ENCODE measurements at regions of chr11 and their contacts with region 1.

Region 1: GRCh38 chr11:75450826-75451821 is 18.1 kb upstream of the KLHL35 start:
- DNase-seq: no peak
- ATAC-seq: no peak
- H3K4me3 ChIP-seq: no peak overlapping the region
- H3K27ac ChIP-seq: no peak overlapping the region
- H3K4me1 ChIP-seq: peaks cover 7% of the 10 kb centered on the region
- H3K27me3 ChIP-seq: no peaks in the 10 kb centered on the region
- CTCF ChIP-seq: peak; percentile 44
- POLR2A ChIP-seq: no peak
- RAD21 ChIP-seq: peak; percentile 24

Region 2: GRCh38 chr11:75499449-75500190 is 48.5 kb after region 1 on chr11:
- CTCF ChIA-PET with region 1: no interaction called
- POLR2A ChIA-PET with region 1: no interaction called
- dilution Hi-C with region 1: no loop called
- in situ Hi-C with region 1: no loop called
- intact Hi-C with region 1: loop called (anchors 5 kb)
- DNase-seq: peak; percentile 95
- ATAC-seq: peak; percentile 90
- H3K4me3 ChIP-seq: no peak overlapping the region
- H3K27ac ChIP-seq: peak overlapping the region; percentile 75
- H3K4me1 ChIP-seq: peaks cover 27% of the 10 kb centered on the region
- H3K27me3 ChIP-seq: no peaks in the 10 kb centered on the region
- CTCF ChIP-seq: no peak
- POLR2A ChIP-seq: no peak
- RAD21 ChIP-seq: no peak

Measured in IMR-90 (cell line).